HCT116 (cell line): ENCODE measurements at regions of chr11 and their contacts with region 1.

Region 1: DNA sequence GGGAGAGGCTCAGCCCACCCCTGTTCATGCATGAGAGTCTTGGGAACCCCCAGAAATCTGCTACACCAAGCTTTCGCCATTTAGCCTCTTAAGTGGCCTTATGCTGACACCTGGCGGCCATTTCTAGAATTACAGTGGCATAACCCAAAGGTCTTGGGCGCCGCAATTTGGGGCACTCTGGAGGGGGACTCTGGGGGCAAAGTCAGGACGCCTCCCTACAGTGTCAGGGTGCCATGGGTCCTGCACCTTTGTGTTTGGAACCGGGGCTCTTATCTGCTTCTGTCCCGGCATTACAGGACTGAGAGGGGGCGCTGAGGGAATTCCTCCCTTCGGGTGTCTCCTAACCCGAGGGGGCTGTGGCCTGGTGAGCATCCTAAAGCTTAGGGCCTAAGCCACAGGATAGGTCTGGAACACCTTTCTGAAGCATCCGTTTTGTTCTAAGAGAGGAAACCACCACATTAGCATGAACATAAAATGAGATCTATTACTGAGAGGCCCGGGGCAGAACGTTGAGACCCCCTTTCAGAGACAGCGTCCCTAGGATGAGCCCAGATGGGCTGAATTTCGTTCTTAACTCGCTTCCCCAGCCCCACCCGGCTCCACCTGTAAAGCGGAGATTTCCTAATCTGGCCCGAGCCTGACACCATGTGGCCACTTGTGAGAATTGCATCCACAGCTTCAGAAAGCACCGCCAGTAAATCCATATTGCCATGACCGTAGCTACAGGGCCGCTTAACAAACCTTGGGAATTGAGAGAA is 9.3 kb downstream of the INS start:
- DNase-seq: peak; percentile 75
- ATAC-seq: peak; percentile 66
- H3K4me3 ChIP-seq: peak overlapping the region; percentile 12 to 20; a peak in 3 of 4 replicates
- H3K27ac ChIP-seq: no peak overlapping the region; the same call in 1 of the 2 replicates
- H3K4me1 ChIP-seq: peaks cover 0 to 4% of the 10 kb centered on the region in 2 experiments; a peak in 1 of 4 replicates
- H3K27me3 ChIP-seq: no peaks in the 10 kb centered on the region; the same call in 1 of the 2 replicates
- CTCF ChIP-seq: peak; percentile 73 to 86 (median 81)
- POLR2A ChIP-seq: no peak
- RAD21 ChIP-seq: peak; percentile 87

Region 2: GRCh38 chr11:1694064-1694845 is 457.4 kb before region 1 on chr11:
- CTCF ChIA-PET with region 1: interaction called, 45 read pairs
- POLR2A ChIA-PET with region 1: no interaction called
- RAD21 ChIA-PET with region 1: interaction called, 7 to 8 read pairs
- intact Hi-C with region 1: loop called (anchors 1 kb)
- DNase-seq: peak; percentile 57
- ATAC-seq: peak; percentile 90
- H3K4me3 ChIP-seq: peak overlapping the region; percentile 69 to 70
- H3K27ac ChIP-seq: peak overlapping the region; percentile 63; the same call in 1 of the 2 replicates
- H3K4me1 ChIP-seq: peaks cover 0 to 12% of the 10 kb centered on the region in 2 experiments; a peak in 2 of 4 replicates
- H3K27me3 ChIP-seq: no peaks in the 10 kb centered on the region
- CTCF ChIP-seq: peak; percentile 83 to 97 (median 87)
- POLR2A ChIP-seq: no peak
- RAD21 ChIP-seq: peak; percentile 100

Region 3: DNA sequence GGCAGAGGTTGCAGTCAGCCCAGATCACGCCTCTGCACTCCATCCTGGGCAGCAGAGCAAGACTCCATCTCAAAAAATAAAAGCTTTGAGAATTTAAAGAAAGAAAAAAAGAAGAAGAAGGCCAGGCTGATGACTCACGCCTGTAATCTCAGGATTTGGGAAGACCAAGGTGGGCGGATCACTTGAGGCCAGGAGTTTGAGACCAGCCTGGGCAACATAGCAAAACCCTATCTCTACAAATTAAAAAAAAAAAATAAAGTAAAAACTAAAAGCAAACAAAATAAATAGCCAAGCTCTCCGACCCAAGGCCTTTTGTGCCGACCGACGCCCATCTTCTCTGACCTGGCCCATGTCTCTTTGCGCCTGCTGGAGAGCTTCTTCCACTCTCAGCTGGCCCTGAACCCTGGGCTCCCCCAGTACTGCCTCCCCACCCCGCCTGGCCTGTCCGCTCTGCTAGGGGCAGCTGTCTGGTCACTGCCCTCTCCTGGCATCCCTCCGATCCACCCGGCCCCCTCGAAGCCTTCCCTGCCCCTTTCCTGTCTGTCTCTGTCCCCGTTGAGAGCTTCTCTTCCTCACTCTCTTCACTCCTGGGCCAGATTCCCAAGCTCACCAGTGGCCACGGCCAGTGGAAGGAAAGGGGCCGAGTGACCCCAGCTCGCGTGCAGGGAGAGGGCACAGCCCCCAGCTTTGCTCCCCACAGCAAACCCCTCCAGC is 303.6 kb before region 1 on chr11:
- CTCF ChIA-PET with region 1: interaction called, 10 read pairs
- POLR2A ChIA-PET with region 1: no interaction called
- RAD21 ChIA-PET with region 1: interaction called in 1 of 2 experiments, 3 read pairs
- intact Hi-C with region 1: no loop called
- DNase-seq: no peak
- ATAC-seq: no peak
- H3K4me3 ChIP-seq: no peak overlapping the region
- H3K27ac ChIP-seq: no peak overlapping the region
- H3K4me1 ChIP-seq: no peaks in the 10 kb centered on the region
- H3K27me3 ChIP-seq: no peaks in the 10 kb centered on the region
- CTCF ChIP-seq: no peak
- POLR2A ChIP-seq: no peak
- RAD21 ChIP-seq: no peak

Region 4: GRCh38 chr11:1943977-1944376 is 207.7 kb before region 1 on chr11:
- CTCF ChIA-PET with region 1: interaction called, 43 read pairs
- POLR2A ChIA-PET with region 1: no interaction called
- RAD21 ChIA-PET with region 1: no interaction called
- intact Hi-C with region 1: no loop called
- DNase-seq: no peak
- ATAC-seq: no peak
- H3K4me3 ChIP-seq: no peak overlapping the region
- H3K27ac ChIP-seq: no peak overlapping the region
- H3K4me1 ChIP-seq: peaks cover 0 to 9% of the 10 kb centered on the region in 2 experiments; a peak in 1 of 4 replicates
- H3K27me3 ChIP-seq: no peaks in the 10 kb centered on the region
- CTCF ChIP-seq: no peak
- POLR2A ChIP-seq: no peak
- RAD21 ChIP-seq: no peak

Region 5: DNA sequence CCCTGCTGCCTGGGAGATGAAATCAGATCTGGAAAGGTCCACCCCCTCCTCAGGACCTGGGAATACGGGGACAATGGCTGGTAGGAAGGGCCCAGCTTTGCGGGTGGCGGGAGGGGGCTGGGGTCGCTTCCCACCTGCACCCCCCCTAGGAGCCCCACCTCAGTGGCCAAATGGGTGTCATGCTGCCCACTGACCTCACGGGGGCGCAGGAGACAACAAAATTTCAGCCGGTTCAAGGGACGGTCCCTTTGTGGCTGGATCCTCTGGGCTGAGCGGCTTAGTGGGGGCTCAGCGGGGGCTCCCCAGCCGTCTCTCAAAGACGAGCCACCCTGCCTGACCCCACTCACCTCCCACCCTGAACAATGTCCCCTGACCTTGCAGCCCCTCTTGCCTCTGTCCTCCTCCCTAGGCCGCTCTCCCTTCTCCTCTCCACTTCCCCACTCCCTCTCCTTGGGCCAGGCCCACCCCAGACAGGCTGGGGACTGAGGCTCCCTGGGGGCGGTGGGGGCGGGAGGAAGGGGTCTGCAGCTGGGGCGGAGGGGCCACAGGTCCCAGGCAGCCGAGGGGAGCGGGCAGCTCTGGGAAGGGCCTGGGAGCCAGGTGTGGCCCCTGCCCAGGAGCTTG is 114.7 kb before region 1 on chr11:
- CTCF ChIA-PET with region 1: interaction called, 351 read pairs
- POLR2A ChIA-PET with region 1: interaction called, 14 read pairs
- RAD21 ChIA-PET with region 1: interaction called, 54 to 55 read pairs
- intact Hi-C with region 1: no loop called
- DNase-seq: no peak
- ATAC-seq: peak; percentile 89
- H3K4me3 ChIP-seq: no peak overlapping the region
- H3K27ac ChIP-seq: no peak overlapping the region
- H3K4me1 ChIP-seq: no peaks in the 10 kb centered on the region
- H3K27me3 ChIP-seq: no peaks in the 10 kb centered on the region; the same call in 1 of the 2 replicates
- CTCF ChIP-seq: no peak
- POLR2A ChIP-seq: no peak
- RAD21 ChIP-seq: no peak

Region 6: GRCh38 chr11:2107521-2107920 is 44.2 kb before region 1 on chr11:
- CTCF ChIA-PET with region 1: no interaction called
- POLR2A ChIA-PET with region 1: no interaction called
- RAD21 ChIA-PET with region 1: no interaction called
- intact Hi-C with region 1: no loop called
- DNase-seq: no peak
- ATAC-seq: no peak
- H3K4me3 ChIP-seq: no peak overlapping the region
- H3K27ac ChIP-seq: no peak overlapping the region
- H3K4me1 ChIP-seq: no peaks in the 10 kb centered on the region
- H3K27me3 ChIP-seq: 0 out of 2 replicates have a peak, but pooled peaks cover 2% of the 10 kb centered on the region
- CTCF ChIP-seq: no peak
- POLR2A ChIP-seq: no peak
- RAD21 ChIP-seq: no peak

Region 7: GRCh38 chr11:2166091-2166851 is 14.6 kb after region 1 on chr11:
- CTCF ChIA-PET with region 1: interaction called, 10 read pairs
- POLR2A ChIA-PET with region 1: no interaction called
- RAD21 ChIA-PET with region 1: no interaction called
- intact Hi-C with region 1: no loop called
- DNase-seq: no peak
- ATAC-seq: peak; percentile 86
- H3K4me3 ChIP-seq: no peak overlapping the region
- H3K27ac ChIP-seq: no peak overlapping the region; the same call in 1 of the 2 replicates
- H3K4me1 ChIP-seq: peaks cover 2 to 21% of the 10 kb centered on the region in 2 experiments; a peak in 3 of 4 replicates
- H3K27me3 ChIP-seq: no peaks in the 10 kb centered on the region
- CTCF ChIP-seq: peak; percentile 68 to 72 (median 69); a peak in 5 of 6 replicates
- POLR2A ChIP-seq: no peak
- RAD21 ChIP-seq: peak; percentile 81